Left colon (tissue), 2 donors: ENCODE measurements at regions of chr4 and their contacts with region 1.

Region 1: GRCh38 chr4:112765317-112765975 is 128.5 kb downstream of the LARP7 start:
- DNase-seq: no peak
- ATAC-seq: no peak

Region 2: DNA sequence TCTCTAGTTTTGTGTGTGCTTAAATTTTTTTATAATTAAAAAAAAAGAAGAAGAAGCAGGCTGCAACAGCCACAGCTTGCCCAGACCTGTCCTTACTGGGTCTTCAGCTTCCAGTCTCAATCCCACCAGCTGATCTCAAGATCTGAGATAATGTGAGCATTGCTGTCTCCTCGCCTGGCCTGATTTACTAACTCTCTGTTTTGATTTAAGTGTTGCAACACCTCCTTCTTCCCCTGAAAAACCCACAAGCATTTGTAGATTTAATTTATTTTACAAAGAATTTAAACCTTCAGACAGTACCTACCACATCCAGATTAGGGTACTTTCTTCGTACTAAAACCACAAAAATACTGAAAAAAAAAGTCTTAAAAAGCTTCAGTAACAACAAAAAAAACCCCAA is 582.2 kb before region 1 on chr4:
- intact Hi-C with region 1: no loop called
- DNase-seq: no peak
- ATAC-seq: no peak

Region 3: DNA sequence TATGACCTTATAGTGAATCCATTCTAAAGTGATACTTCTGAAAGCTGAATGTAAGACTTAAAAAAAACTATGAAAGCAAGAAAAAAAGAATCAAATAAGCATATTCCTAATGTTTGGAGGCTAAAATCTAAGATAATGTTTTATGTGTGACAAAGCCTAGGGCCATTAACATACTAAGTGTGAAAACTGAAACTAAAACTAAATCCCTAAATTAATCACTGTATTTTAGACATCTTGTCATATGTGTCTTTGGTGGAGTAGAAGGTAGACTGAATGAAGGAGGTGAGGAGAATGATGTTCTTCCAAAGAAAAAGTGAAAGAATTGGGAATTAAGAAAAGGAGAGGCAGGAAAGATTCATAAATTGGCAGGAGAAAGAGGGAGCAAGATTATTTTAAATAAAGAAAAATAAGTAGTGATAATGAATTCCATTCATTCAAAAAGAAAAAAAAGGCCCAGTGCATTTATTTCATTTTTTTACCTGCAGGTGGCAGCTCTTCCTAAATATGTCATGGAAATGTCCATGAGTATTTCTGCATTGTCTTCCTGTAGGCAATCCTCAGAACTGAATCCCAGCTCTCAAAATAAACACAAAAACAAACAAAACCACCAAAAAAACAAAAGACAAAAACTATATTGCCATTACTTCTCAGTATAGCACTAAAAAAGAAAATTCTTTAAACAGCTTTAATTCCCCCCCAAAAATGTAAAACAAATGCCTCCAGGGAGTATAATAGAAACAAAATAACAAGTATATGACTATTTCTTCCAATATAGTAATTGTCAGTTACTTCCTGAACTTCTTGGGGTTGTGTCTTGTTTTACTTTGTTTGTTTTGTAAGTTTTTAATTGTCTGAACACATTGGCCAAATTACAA is 550.8 kb before region 1 on chr4:
- intact Hi-C with region 1: no loop called
- DNase-seq: no peak
- ATAC-seq: peak; percentile 62

Region 4: DNA sequence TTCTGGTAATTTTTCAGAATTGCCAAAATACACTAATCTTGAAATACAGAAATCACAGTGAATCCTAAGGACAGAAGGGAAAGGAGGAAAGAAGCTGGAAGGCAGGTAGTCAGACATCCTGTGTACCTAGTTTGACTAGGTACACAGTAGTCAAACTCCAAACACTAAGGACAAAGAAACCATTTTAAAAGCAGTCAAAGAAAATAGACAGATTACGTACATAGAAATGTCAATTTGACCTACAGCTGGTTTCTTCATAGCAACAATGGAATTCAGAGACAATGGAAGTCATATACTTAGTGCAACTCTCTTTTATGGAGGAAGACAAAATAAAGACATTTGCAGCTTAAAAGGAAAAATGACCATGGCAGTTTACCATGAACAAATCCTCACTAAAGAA is 328.5 kb before region 1 on chr4:
- intact Hi-C with region 1: no loop called
- DNase-seq: no peak
- ATAC-seq: no peak

Region 5: GRCh38 chr4:112938461-112939058 is 173.1 kb after region 1 on chr4:
- intact Hi-C with region 1: loop called in 1 of 2 experiments (anchors 10 kb)
- DNase-seq: no peak
- ATAC-seq: no peak